ENCODE measurements at regions of chr1 and their contacts with region 1.

Region 1: DNA sequence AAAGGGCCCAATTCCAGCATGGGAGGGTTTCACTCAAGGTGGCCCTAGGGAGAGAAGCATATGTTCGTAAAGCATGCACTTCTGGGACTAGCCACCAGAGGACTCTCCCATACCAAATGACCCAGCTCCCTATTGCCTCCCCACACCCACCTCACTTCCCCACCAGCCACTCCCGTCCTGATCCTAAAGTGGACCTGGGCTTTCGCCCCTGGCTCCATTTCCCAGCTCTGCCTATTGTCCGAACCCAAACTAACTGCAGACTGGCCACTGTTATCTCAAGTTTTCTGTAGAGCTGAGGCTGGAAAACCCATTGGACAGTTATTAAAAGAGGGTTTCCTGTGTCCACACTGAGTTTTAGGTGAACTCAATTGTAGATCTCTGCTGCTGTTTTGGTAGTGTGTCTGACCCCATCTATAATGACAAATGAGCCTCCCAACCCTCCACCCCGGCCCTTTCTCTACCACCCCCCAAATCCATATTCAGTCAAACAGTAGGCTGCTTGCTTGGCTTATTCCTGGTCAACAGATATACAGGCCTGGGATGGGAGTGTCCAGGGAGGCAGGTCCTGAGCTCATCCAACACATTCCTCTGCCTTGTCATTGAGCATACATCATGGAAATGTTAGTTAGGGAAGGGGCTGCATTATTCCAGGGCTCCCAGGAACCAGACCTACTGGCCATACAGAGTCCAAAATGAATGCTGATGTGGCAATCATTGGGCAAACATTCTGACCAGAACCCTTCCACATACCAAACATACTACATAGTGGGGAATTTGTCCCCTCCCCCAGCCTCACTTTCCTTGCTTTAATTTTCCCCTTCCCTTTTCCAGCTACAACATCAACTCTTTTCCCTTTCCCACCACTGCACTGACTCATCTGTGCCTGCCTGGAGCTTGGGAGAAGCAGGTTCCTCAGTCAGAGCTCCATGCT is 59.2 kb downstream of the ABCA4 start:
- DNase-seq: no peak
- H3K4me3 ChIP-seq: no peak overlapping the region
- H3K27me3 ChIP-seq: no peaks in the 10 kb centered on the region
- CTCF ChIP-seq: peak; percentile 89

Region 2: GRCh38 chr1:94012686-94013624 is 48.8 kb before region 1 on chr1:
- CTCF ChIA-PET with region 1: no interaction called
- POLR2A ChIA-PET with region 1: no interaction called
- DNase-seq: no peak
- H3K4me3 ChIP-seq: no peak overlapping the region
- H3K27me3 ChIP-seq: no peaks in the 10 kb centered on the region; the same call in none of the 2 replicates
- CTCF ChIP-seq: no peak

Region 3: DNA sequence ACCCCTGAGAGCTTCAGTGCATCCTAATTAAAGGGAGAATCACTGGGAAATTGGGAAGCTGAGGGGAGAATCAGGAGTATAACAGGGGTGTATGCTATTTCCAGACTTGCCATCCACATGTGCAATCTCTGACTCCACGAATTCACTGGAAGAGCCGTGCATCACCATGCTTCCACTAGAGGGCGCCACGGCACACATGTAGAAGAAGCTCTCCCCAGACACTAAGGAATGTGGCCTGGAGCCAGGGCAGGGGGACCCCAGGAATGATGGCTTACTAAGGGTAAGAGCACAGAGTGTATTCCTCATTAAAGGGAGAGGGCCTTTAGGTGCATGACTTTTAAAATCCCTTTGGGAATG is 22.3 kb before region 1 on chr1:
- CTCF ChIA-PET with region 1: interaction called, 28 read pairs
- POLR2A ChIA-PET with region 1: interaction called, 13 read pairs
- DNase-seq: no peak
- H3K4me3 ChIP-seq: no peak overlapping the region
- H3K27me3 ChIP-seq: no peaks in the 10 kb centered on the region; the same call in 1 of the 2 replicates
- CTCF ChIP-seq: peak; percentile 86

Region 4: DNA sequence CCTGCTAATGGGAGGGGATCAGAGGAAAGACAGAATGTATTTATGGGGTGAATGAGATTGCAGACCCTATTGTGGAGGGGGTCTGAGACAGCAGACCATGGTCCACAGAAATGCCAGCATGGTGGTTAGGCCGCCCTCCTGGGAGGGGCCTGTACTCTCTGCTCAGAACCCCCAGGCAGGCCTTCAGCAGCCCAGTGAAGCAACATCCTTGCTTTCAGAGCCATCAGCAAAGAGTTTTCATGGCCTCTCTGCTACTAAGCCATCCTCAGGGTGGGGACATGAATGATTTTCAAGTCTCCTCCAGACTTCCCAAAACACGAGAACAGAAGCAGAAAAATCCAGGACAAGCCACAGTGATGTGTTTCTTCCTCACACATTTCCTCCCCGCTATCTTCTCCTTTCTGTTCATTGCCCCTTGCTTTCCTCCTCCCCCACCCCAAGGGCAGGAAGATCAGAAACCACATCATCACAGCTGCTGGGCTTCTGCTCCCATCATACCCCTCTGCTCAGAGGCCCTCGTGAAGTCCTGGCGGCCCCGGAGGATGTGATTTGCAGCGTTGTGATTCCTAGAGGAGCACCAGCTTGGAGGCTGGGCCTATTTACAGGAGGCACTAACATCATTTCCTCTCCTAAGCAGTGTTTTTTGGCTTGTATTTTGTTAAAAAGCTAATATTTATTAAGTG is 11.2 kb after region 1 on chr1:
- CTCF ChIA-PET with region 1: interaction called, 13 read pairs
- POLR2A ChIA-PET with region 1: no interaction called
- DNase-seq: no peak
- H3K4me3 ChIP-seq: no peak overlapping the region
- H3K27me3 ChIP-seq: no peaks in the 10 kb centered on the region; the same call in 1 of the 2 replicates
- CTCF ChIP-seq: no peak

Region 5: GRCh38 chr1:94180650-94181049 is 118.9 kb after region 1 on chr1:
- CTCF ChIA-PET with region 1: interaction called, 22 read pairs
- POLR2A ChIA-PET with region 1: no interaction called
- DNase-seq: no peak
- H3K4me3 ChIP-seq: no peak overlapping the region
- H3K27me3 ChIP-seq: no peaks in the 10 kb centered on the region
- CTCF ChIP-seq: no peak

Region 6: DNA sequence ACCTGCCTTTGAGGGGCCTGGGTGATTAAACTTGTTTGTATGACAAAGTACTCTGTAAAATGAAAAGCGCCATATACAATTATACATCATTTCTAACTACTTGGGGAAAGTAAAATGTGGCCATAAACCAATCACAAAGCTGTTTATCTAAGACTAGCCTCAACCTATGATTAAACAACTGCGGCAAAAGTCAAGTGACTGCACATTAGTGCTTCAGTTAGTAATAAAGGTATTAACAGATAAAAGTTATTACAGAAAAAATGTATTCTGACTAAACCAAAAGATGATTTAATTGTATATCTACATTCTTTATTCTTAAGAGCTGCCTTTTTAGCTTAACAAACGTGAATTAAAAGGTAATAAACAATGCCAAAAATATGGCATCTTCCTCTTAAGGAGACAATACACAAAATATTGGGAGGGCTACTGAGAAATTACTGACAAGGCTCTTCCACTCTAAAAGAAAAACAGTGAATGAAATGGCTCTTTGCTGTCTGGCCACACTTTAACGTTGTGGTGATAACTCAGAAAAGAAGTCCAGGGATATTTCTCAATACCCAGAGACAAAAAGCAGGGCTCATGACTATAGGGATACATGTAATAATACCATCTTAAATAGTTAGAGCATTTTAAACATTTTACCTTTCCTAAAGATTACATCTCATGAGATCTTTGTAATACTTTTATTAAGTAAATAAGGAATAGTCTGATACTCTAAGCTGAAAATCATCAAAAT is 167.0 kb after region 1 on chr1:
- CTCF ChIA-PET with region 1: interaction called, 8 read pairs
- POLR2A ChIA-PET with region 1: interaction called, 12 read pairs
- DNase-seq: no peak
- H3K4me3 ChIP-seq: no peak overlapping the region
- H3K27me3 ChIP-seq: no peaks in the 10 kb centered on the region
- CTCF ChIP-seq: no peak

Region 7: GRCh38 chr1:94325379-94326302 is 263.9 kb after region 1 on chr1:
- CTCF ChIA-PET with region 1: interaction called, 215 read pairs
- POLR2A ChIA-PET with region 1: interaction called, 3 read pairs
- DNase-seq: peak; percentile 99
- H3K4me3 ChIP-seq: no peak overlapping the region
- H3K27me3 ChIP-seq: no peaks in the 10 kb centered on the region
- CTCF ChIP-seq: no peak

Measured in BJ (cell line).